PC-3 (cell line): ENCODE measurements at regions of chr7 and their contacts with region 1.

Region 1: DNA sequence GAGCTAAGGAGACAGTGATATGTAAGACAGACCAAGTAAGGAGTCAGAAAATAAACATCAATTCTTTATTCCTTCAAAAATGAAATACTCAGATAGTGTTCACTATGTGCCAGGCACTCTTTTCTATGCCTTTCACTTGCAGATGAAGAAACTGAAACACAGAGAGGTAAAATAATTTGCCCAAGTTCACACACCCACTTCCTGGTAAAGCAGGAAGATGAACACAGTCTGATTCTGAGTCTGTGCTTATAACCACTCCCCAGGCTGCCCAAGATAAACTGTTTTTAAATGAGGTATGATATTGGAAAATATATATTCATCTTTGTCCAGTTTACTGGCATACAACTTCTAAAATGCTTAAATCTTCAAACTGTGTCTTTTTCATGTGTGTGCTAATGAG is 294.4 kb upstream of the NPVF start:
- DNase-seq: no peak
- ATAC-seq: no peak
- H3K4me3 ChIP-seq: no peak overlapping the region
- H3K27ac ChIP-seq: no peak overlapping the region
- H3K4me1 ChIP-seq: no peaks in the 10 kb centered on the region
- H3K27me3 ChIP-seq: peaks cover 39% of the 10 kb centered on the region
- CTCF ChIP-seq: no peak

Region 2: GRCh38 chr7:25512061-25512687 is 10.6 kb before region 1 on chr7:
- CTCF ChIA-PET with region 1: no interaction called
- POLR2A ChIA-PET with region 1: interaction called, 12 read pairs
- intact Hi-C with region 1: no loop called
- DNase-seq: no peak
- ATAC-seq: no peak
- H3K4me3 ChIP-seq: no peak overlapping the region
- H3K27ac ChIP-seq: no peak overlapping the region
- H3K4me1 ChIP-seq: no peaks in the 10 kb centered on the region
- H3K27me3 ChIP-seq: no peaks in the 10 kb centered on the region
- CTCF ChIP-seq: no peak

Region 3: GRCh38 chr7:25565949-25566348 is 43.2 kb after region 1 on chr7:
- CTCF ChIA-PET with region 1: no interaction called
- POLR2A ChIA-PET with region 1: no interaction called
- intact Hi-C with region 1: no loop called
- DNase-seq: peak; percentile 75
- ATAC-seq: peak; percentile 22; the same call in 1 of the 2 replicates
- H3K4me3 ChIP-seq: no peak overlapping the region
- H3K27ac ChIP-seq: no peak overlapping the region
- H3K4me1 ChIP-seq: no peaks in the 10 kb centered on the region
- H3K27me3 ChIP-seq: peaks cover 41% of the 10 kb centered on the region
- CTCF ChIP-seq: peak; percentile 100